Endothelial cell of umbilical vein (primary cell): ENCODE measurements at regions of chr15 and their contacts with region 1.

Region 1: DNA sequence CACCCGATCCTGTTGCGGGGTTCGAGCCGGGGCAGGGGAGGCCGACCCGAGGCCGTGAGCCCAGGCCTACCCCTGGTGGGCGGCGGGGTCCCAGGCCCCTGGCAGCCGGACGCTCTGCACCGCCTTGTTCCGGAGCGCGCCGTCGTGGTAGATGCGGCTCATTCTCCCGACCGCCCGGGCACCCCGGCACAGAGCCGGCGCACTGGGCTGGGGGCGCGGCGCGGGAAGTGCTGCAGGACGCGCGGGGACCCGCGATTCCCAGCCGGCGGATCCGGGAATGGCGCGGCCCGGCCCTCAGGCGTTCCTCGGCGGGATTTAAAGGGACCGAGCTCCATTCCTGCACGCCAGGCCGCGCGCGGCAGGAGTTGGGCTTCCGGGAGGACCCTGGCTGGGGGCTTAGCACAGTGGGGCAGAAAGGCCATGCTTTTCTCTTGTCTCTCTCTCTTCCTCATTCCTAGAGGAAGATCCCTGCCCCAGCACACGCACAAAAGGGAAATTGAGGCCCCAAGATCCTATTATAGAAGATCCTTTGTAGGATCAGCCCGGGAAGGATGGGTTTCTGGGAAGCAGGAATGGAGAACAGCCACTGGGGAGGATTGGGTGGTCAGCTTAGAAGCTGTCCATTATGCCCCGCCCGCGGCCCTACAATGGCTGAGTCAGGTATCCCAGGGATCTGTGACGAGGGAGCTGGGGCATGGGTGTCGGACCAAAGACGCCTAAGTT is at the start of gene ARPIN:
- DNase-seq: peak; percentile 38
- H3K4me3 ChIP-seq: peak within 1 kb of the TSS; percentile 61 to 84 (median 68)
- H3K27ac ChIP-seq: peak within 1 kb of the TSS; percentile 5
- H3K4me1 ChIP-seq: peaks cover 11% of the 10 kb centered on the region
- H3K27me3 ChIP-seq: no peaks in the 10 kb centered on the region
- CTCF ChIP-seq: no peak
- POLR2A ChIP-seq: peak; percentile 41
- total RNA-seq, gene ARPIN: 18.7 and 23.3 TPM in 2 replicates

Region 2: DNA sequence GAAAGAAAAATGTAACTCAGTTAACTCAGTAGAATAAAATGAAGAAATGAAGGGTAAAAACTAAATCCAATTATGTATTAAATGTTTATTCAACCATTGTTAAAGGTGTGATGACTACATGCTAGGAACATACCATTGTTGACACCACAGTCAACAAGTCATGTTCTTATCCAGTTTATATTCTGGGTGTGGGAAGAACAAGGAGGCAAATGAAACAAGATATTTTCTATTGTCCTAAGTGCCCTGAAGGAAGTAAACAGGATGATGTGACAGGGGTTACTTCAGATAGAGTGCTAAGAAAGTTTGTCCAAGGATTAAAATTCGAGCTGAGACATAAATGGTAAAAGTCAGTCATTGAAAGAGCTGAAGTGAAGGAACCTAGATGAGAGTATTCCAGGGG is 32.1 kb before region 1 on chr15:
- CTCF ChIA-PET with region 1: no interaction called
- POLR2A ChIA-PET with region 1: no interaction called
- dilution Hi-C with region 1: no loop called
- intact Hi-C with region 1: no loop called
- DNase-seq: peak; percentile 29
- H3K4me3 ChIP-seq: no peak overlapping the region
- H3K27ac ChIP-seq: peak overlapping the region; percentile 31
- H3K4me1 ChIP-seq: peaks cover 4% of the 10 kb centered on the region
- H3K27me3 ChIP-seq: no peaks in the 10 kb centered on the region
- CTCF ChIP-seq: no peak
- POLR2A ChIP-seq: no peak

Region 3: GRCh38 chr15:89893696-89894455 is 19.0 kb before region 1 on chr15 and contains the start of gene AP3S2:
- CTCF ChIA-PET with region 1: interaction called, 7 read pairs
- POLR2A ChIA-PET with region 1: no interaction called
- dilution Hi-C with region 1: no loop called
- intact Hi-C with region 1: loop called (anchors 1 kb)
- DNase-seq: peak; percentile 92
- H3K4me3 ChIP-seq: peak within 1 kb of the TSS; percentile 77 to 96 (median 86)
- H3K27ac ChIP-seq: peak within 1 kb of the TSS; percentile 69
- H3K4me1 ChIP-seq: peaks cover 5% of the 10 kb centered on the region
- H3K27me3 ChIP-seq: no peaks in the 10 kb centered on the region
- CTCF ChIP-seq: no peak
- POLR2A ChIP-seq: peak; percentile 85
- total RNA-seq, gene AP3S2: 20.4 and 31.1 TPM in 2 replicates